Naive thymus-derived CD4-positive, alpha-beta T cell (primary cell): ENCODE measurements at regions of chr4 and their contacts with region 1.

Region 1: DNA sequence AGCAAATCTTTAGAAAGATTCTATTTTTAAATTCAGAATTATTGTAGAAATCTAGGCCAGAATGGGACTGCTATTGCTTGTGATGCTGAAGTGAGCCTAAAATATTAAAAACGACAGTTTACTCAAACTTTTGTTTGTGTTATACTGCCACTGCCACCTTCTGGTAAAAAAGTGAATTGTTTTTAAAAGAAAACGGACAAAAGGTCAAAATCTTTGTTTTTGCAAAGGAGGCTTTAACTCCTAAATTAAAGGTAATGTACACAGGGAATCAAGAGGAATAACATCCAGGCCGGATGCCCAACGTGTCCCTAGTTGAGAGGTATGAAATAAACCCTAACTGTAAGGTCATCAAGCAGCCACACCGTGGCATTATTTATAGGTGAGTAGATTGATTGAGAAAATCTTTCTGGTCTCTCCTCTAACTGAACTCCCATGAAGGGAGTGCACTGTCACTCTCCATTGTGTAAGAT is 338.3 kb upstream of the GALNT7 start:
- DNase-seq: no peak
- ATAC-seq: no peak
- H3K4me3 ChIP-seq: no peak overlapping the region
- H3K4me3 Mint-ChIP-seq: no peak overlapping the region
- H3K27ac ChIP-seq: no peak overlapping the region
- H3K27ac Mint-ChIP-seq: no peak overlapping the region
- H3K4me1 ChIP-seq: no peaks in the 10 kb centered on the region
- H3K4me1 Mint-ChIP-seq: no peaks in the 10 kb centered on the region
- H3K27me3 ChIP-seq: no peaks in the 10 kb centered on the region
- H3K27me3 Mint-ChIP-seq: peaks cover 0 to 30% (median 5%) of the 10 kb centered on the region in 5 donors

Region 2: DNA sequence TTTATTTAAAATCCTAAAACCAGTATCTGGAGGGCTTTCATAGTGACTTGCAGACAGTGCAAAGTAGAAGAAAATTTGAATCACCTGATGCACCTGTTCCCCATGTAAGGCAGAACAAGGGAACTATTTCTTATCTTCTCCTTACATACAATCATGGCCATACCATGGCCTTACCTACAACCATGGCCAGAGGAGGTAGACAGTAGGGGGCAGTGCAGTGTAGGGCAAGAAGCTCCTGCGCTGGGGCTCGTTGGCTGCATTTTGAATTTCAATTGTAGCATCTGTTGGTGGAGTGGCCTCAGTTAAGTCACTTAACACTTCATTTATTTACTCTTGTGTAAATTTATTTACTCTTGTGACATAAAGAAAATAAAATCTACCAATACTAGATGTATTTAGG is 984.1 kb before region 1 on chr4:
- CTCF ChIA-PET with region 1: no interaction called
- POLR2A ChIA-PET with region 1: no interaction called
- intact Hi-C with region 1: loop called in 1 of 2 experiments (anchors 5 kb)
- DNase-seq: no peak
- ATAC-seq: no peak
- H3K4me3 ChIP-seq: no peak overlapping the region
- H3K4me3 Mint-ChIP-seq: no peak overlapping the region
- H3K27ac ChIP-seq: no peak overlapping the region
- H3K27ac Mint-ChIP-seq: no peak overlapping the region
- H3K4me1 ChIP-seq: no peaks in the 10 kb centered on the region
- H3K4me1 Mint-ChIP-seq: no peaks in the 10 kb centered on the region
- H3K27me3 ChIP-seq: no peaks in the 10 kb centered on the region
- H3K27me3 Mint-ChIP-seq: no peaks in the 10 kb centered on the region

Region 3: DNA sequence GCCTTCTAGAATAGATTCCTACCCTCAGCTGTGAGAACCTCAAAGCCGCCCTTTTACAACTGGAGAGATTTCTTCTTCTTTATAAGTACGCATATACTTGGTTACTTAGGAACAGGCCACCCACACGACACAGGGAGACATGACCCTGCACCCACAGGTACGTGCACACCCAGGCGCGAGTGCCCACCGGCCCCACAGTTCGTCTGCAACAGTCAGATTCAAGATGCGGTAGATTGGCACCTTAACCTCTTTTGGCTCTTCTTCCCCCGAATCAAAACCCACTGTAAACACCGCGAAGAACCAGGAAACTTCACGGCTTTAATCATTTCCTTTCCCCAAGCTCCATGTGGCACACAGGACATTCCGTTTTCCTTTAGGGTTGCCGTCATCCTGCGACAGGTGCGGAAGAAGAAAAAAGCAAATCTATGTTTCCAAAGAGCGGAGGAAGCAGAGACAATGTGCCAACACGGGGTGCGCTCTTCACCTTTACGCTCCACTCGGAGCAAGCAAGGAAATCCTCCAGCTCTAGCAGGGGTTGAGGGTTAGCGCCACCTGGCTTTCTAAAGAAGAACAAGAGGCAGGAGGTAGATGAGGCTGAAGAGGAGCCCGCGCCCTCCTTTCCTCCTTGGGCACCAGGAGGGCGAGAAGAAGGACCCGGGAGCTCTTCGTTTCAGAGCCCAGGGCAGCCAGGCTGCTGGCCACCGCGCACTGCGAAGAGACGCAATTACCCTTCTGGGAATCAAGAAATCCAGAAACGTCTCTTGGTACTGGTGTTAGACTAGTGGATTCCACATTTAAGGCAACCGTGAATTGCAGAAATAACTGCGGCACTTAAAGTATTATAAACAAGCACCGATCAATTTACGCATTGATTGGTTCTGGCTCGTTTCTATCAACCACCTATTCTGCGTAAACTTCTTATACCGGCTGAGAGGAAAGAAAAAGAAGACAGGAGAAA is 664.0 kb after region 1 on chr4:
- CTCF ChIA-PET with region 1: no interaction called
- POLR2A ChIA-PET with region 1: no interaction called
- intact Hi-C with region 1: no loop called
- DNase-seq: peak in 8 of 9 donors; percentile 43 to 71 (median 56)
- ATAC-seq: peak; percentile 96
- H3K4me3 ChIP-seq: peak overlapping the region; percentile 44
- H3K4me3 Mint-ChIP-seq: peak overlapping the region; percentile 74 to 92 (median 85)
- H3K27ac ChIP-seq: no peak overlapping the region
- H3K27ac Mint-ChIP-seq: peak overlapping the region in 1 of 9 donors; percentile 50
- H3K4me1 ChIP-seq: peaks cover 3 to 9% of the 10 kb centered on the region in 2 donors
- H3K4me1 Mint-ChIP-seq: peaks cover 9 to 35% (median 15%) of the 10 kb centered on the region in 7 donors
- H3K27me3 ChIP-seq: no peaks in the 10 kb centered on the region
- H3K27me3 Mint-ChIP-seq: peaks cover 40 to 71% (median 50%) of the 10 kb centered on the region in 5 donors